Activated B cell treated with CpG ODN at 0.5 μM for 24 hours (primary cell): ENCODE measurements at regions of chr1 and their contacts with region 1.

Region 1: GRCh38 chr1:234373064-234373958 is at the start of gene COA6:
- DNase-seq: peak; percentile 88
- ATAC-seq: peak; percentile 86
- H3K4me3 Mint-ChIP-seq: peak within 1 kb of the TSS; percentile 99
- H3K27ac Mint-ChIP-seq: peak within 1 kb of the TSS; percentile 99
- H3K4me1 Mint-ChIP-seq: peaks cover 30% of the 10 kb centered on the region
- H3K27me3 Mint-ChIP-seq: no peaks in the 10 kb centered on the region
- CTCF ChIP-seq: no peak
- total RNA-seq, gene COA6: 20.7 and 24.0 TPM in 2 replicates

Region 2: DNA sequence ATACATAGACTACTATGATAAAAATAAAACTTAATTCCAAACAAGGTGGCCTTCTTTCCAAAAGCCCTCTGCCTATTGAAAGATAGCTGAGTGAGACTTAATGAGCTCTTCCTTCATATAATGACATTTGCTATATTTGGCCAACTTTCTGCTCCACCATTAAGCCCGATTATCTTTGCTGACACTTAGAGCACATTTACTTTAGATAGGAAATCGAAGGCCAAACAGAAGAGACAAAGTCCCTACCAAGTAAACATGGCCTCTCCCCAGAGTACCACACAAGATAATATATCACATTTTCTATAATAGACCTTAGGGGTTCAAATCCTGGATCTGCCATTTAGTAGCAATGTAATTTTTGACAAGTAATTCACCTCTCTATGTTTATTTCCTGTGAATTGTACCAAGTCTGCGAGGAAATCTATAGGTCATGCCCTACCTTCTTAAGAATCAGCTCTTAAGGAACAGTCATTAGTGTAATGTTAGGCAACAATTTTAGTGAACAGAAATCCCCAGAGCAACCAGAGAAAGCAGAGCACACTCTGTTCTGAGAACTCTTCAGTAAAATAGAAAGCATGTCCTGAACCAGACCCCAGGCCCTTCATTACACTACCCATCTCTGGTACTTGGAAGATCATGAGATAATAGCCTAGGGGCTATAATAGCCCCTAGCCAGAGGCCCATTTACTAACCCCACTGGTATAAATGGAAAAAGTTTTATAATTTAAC is 17.4 kb before region 1 on chr1:
- CTCF ChIA-PET with region 1: no interaction called
- POLR2A ChIA-PET with region 1: interaction called, 19 read pairs
- intact Hi-C with region 1: loop called (anchors 1 kb)
- DNase-seq: no peak
- ATAC-seq: no peak
- H3K4me3 Mint-ChIP-seq: peak overlapping the region; percentile 84
- H3K27ac Mint-ChIP-seq: peak overlapping the region; percentile 80
- H3K4me1 Mint-ChIP-seq: peaks cover 5% of the 10 kb centered on the region
- H3K27me3 Mint-ChIP-seq: peaks cover 7% of the 10 kb centered on the region
- CTCF ChIP-seq: no peak

Region 3: GRCh38 chr1:234478481-234479309 is 105.4 kb after region 1 on chr1 and contains the start of gene TARBP1:
- CTCF ChIA-PET with region 1: no interaction called
- POLR2A ChIA-PET with region 1: interaction called, 13 read pairs
- intact Hi-C with region 1: loop called (anchors 1 kb)
- DNase-seq: peak; percentile 82
- ATAC-seq: peak; percentile 66
- H3K4me3 Mint-ChIP-seq: peak within 1 kb of the TSS; percentile 85
- H3K27ac Mint-ChIP-seq: peak within 1 kb of the TSS; percentile 88
- H3K4me1 Mint-ChIP-seq: peaks cover 43% of the 10 kb centered on the region
- H3K27me3 Mint-ChIP-seq: peaks cover 5% of the 10 kb centered on the region
- CTCF ChIP-seq: no peak
- total RNA-seq, gene TARBP1: 27.0 and 30.4 TPM in 2 replicates

Region 4: GRCh38 chr1:234599617-234600417 is 226.5 kb after region 1 on chr1:
- CTCF ChIA-PET with region 1: no interaction called
- POLR2A ChIA-PET with region 1: interaction called, 3 read pairs
- intact Hi-C with region 1: loop called (anchors 10 kb)
- DNase-seq: peak; percentile 67
- ATAC-seq: peak; percentile 73
- H3K4me3 Mint-ChIP-seq: peak overlapping the region; percentile 86
- H3K27ac Mint-ChIP-seq: peak overlapping the region; percentile 89
- H3K4me1 Mint-ChIP-seq: peaks cover 66% of the 10 kb centered on the region
- H3K27me3 Mint-ChIP-seq: no peaks in the 10 kb centered on the region
- CTCF ChIP-seq: no peak

Region 5: GRCh38 chr1:235160957-235161684 is 787.8 kb after region 1 on chr1 and contains the start of gene RBM34:
- CTCF ChIA-PET with region 1: no interaction called
- POLR2A ChIA-PET with region 1: interaction called, 10 read pairs
- intact Hi-C with region 1: loop called (anchors 5 kb)
- DNase-seq: peak; percentile 90
- ATAC-seq: peak; percentile 94
- H3K4me3 Mint-ChIP-seq: peak within 1 kb of the TSS; percentile 96
- H3K27ac Mint-ChIP-seq: peak within 1 kb of the TSS; percentile 99
- H3K4me1 Mint-ChIP-seq: peaks cover 21% of the 10 kb centered on the region
- H3K27me3 Mint-ChIP-seq: no peaks in the 10 kb centered on the region
- CTCF ChIP-seq: no peak
- total RNA-seq, gene RBM34: 122 and 128 TPM in 2 replicates

Region 6: DNA sequence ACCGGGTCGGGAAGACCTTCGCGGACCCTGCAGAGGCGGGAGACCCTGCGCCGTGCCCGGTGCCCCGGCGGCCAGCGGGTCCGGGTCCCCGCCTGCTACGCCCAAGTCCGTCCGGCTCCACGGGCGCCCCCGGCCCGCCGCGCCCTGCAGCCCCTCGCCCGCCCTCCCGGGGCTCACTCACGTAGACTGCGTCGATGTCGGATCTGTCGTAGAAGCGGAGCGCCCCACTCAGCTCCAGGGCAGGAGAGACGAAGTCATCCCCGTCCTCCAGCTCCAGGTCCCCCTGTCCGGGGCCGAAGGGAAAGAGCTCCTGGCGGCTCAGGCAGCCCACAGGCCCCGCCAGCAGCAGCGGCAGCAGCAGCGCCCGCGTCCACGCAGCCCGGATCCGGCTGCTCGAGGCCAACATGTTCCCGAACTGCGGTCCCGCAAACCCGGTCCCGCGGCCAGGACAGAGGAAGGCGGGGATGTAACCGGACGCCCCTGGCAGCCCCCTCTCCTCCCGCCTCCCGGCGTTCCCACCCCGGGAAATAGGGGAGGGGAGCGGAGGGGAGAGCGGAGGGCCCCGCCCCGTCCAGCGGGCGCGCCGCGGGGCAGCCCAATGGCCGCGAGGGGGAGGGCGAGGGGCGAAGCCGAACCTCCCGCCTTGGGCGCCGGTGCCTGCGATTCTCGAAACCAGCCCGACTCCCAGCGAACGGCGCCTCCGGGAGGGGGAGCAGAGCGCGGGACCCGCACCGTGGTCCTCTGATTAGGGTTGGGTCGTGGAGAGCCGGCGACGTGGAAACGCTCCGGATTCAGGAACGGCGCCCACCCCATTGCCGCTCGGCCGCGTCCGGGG is 1691.6 kb after region 1 on chr1 and contains the start of gene NID1:
- CTCF ChIA-PET with region 1: no interaction called
- POLR2A ChIA-PET with region 1: no interaction called
- intact Hi-C with region 1: loop called (anchors 5 kb)
- DNase-seq: peak; percentile 38
- ATAC-seq: peak; percentile 18
- H3K4me3 Mint-ChIP-seq: peak within 1 kb of the TSS; percentile 70
- H3K27ac Mint-ChIP-seq: no peak within 1 kb of the TSS
- H3K4me1 Mint-ChIP-seq: peaks cover 33% of the 10 kb centered on the region
- H3K27me3 Mint-ChIP-seq: peaks cover 25% of the 10 kb centered on the region
- CTCF ChIP-seq: no peak
- total RNA-seq, gene NID1: 0.04 and 0.10 TPM in 2 replicates